AG04450 (cell line): ENCODE measurements at regions of chr6 and their contacts with region 1.

Region 1: DNA sequence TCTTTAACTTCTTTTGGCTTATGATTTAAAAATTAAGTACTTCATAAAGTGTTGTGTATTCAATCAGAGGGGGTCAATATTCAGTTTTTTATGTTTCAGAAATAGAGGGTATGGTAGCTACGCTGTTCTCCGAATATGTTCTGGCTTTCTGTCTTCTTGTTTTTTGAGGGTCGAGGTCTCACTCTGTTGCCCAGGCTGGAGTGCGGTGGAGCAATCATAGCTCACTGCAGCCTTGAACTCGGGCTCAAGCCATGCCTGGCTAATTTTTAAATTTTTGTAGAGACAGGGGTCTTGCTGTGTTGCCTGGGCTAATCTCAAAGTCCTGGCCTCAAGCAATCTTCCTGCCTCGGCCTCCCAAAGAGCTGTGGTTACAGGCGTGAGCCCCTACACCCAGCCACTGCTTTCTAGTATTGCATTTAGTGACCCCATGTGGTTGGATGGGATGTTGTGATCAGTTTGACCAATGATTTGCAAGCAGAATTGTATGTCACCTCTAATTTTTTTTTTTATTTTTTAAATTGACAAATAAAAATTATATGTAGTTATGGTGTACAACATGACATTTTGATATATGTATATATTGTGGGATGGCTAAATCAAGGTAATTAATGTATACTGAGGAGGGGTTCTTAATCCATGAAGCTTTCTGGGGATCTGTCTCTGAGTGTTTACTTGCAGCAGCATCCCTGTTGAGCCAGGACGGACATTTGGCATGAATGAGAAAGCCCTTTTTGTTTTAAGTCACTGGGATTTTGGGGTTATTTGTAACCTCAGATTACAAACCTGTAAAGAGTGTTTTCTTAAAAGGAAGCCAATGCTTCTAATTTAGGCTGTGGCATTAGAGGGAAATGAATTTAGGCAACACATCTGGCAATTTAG is 38.5 kb upstream of the DEK start:
- DNase-seq: no peak
- H3K4me3 ChIP-seq: no peak overlapping the region
- H3K27ac ChIP-seq: no peak overlapping the region
- H3K27me3 ChIP-seq: no peaks in the 10 kb centered on the region
- CTCF ChIP-seq: no peak

Region 2: GRCh38 chr6:17851001-17851719 is 451.6 kb before region 1 on chr6:
- CTCF ChIA-PET with region 1: no interaction called
- POLR2A ChIA-PET with region 1: interaction called, 10 read pairs
- DNase-seq: no peak
- H3K4me3 ChIP-seq: no peak overlapping the region; the same call in 1 of the 2 replicates
- H3K27ac ChIP-seq: peak overlapping the region; percentile 65
- H3K27me3 ChIP-seq: no peaks in the 10 kb centered on the region
- CTCF ChIP-seq: no peak

Region 3: DNA sequence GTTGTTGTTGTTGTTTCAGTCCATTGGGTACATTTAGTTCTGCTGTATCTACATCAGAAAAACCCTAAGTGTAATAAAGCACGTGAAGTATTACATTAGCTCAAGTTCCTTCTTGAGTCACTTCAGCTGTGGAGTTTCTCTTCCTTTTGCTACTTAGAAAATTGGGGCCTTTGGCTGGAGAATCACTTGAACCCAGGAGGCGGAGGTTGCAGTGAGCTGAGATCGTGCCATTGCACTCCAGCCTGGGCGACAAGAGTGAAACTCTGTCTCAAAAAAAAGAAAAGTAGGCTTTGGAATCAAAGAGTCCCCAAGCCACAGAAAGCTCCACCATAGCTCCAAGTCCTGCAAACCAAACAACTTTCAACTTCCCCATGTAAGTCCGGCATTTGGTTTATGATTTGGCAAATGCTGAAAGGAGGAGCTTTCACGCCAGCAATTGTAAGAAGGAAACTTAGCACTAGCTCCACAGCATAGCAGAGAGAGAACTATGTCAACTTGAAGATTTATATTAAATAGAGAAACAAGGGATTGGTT is 27.8 kb after region 1 on chr6:
- CTCF ChIA-PET with region 1: interaction called, 11 read pairs
- POLR2A ChIA-PET with region 1: no interaction called
- DNase-seq: no peak
- H3K4me3 ChIP-seq: no peak overlapping the region
- H3K27ac ChIP-seq: no peak overlapping the region
- H3K27me3 ChIP-seq: no peaks in the 10 kb centered on the region
- CTCF ChIP-seq: no peak